H1 (cell line): ENCODE measurements at regions of chr4 and their contacts with region 1.

Region 1: GRCh38 chr4:793941-794621 is 31.8 kb downstream of the CPLX1 start:
- DNase-seq: no peak
- H3K4me3 ChIP-seq: no peak overlapping the region
- H3K27ac ChIP-seq: no peak overlapping the region
- H3K4me1 ChIP-seq: peaks cover 5 to 38% (median 21%) of the 10 kb centered on the region in 4 experiments
- H3K27me3 ChIP-seq: peaks cover 19 to 65% (median 53%) of the 10 kb centered on the region in 4 experiments
- CTCF ChIP-seq: no peak
- EP300 ChIP-seq: no peak
- POLR2A ChIP-seq: no peak
- RAD21 ChIP-seq: no peak

Region 2: DNA sequence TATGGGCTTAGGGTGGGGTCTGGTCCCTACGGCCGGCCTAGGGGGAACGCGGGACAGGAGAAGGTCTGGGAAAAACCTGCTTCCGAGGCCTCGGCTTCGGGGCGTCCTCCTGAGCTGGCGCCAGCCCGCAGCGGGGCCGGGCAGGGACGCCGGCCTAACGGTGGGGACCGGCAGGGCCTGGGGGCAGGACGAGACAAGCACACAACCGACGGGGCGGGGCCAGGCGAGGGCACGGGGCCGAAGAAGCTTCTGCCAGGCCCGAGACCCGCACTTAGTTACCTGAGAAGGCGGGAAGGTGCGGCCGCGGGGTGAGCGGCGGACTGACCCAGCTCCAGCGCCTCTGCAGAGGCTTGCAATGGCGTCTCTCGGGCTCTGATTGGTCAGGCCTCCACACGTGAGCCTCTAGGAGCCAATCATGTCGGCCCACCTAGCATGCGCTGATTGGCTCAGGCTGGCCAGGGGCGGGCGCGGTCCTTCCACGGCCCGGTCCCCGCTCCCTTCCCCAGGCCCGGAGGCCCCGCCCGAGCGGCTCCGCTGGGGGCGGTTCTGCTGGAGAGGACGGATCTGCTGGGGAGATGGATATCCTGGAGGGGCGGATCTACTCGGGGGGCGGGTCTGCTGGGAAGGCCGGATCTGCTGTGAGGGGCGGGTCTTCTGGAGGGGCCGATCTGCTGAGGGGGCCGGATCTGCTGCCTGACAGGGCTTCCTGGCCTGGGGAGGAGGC is 12.4 kb before region 1 on chr4:
- CTCF ChIA-PET with region 1: interaction called, 12 read pairs
- POLR2A ChIA-PET with region 1: interaction called, 14 read pairs
- DNase-seq: peak; percentile 98
- H3K4me3 ChIP-seq: peak overlapping the region; percentile 77 to 92 (median 91)
- H3K27ac ChIP-seq: peak overlapping the region; percentile 94
- H3K4me1 ChIP-seq: peaks cover 0 to 21% (median 18%) of the 10 kb centered on the region in 4 experiments; a peak in 6 of 7 replicates
- H3K27me3 ChIP-seq: peaks cover 27 to 38% (median 38%) of the 10 kb centered on the region in 4 experiments
- CTCF ChIP-seq: no peak
- EP300 ChIP-seq: no peak
- POLR2A ChIP-seq: peak in 1 of 2 experiments; percentile 97; a peak in 2 of 3 replicates
- RAD21 ChIP-seq: no peak

Region 3: DNA sequence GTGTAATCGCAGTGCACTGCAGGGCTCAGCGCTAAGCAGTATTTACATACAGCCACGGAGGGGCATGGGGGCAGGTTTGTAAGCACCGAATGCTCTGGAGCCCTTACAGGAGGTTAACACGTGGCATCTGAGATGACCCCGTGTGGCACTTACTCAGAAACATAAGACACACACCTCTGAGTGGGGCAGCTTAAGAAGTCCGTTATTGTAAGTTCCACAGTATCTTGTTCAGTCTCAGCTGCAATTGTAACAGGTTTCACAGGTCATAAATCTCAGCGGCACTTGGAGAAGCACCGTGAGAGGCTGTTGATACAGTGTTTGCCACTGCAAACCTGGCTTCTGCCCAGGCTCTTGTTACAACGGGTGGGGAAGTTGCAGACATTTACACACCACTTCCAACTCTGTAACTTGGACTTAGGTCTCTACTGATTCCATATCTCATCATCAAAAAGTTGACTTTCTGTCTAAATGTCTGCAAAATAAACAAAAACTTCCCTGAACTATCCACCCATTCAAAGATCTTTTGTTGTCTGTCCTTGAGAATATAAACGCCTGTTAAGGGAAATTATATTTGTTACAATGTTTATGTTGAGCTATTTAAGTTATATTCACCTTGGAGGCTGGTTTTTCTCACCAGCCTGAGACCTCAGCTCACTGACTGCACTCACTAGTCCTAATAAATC is 21.5 kb after region 1 on chr4:
- CTCF ChIA-PET with region 1: interaction called, 11 read pairs
- POLR2A ChIA-PET with region 1: no interaction called
- DNase-seq: no peak
- H3K4me3 ChIP-seq: no peak overlapping the region
- H3K27ac ChIP-seq: no peak overlapping the region
- H3K4me1 ChIP-seq: no peaks in the 10 kb centered on the region
- H3K27me3 ChIP-seq: peaks cover 7 to 73% (median 43%) of the 10 kb centered on the region in 4 experiments
- CTCF ChIP-seq: no peak
- EP300 ChIP-seq: no peak
- POLR2A ChIP-seq: no peak
- RAD21 ChIP-seq: no peak

Region 4: DNA sequence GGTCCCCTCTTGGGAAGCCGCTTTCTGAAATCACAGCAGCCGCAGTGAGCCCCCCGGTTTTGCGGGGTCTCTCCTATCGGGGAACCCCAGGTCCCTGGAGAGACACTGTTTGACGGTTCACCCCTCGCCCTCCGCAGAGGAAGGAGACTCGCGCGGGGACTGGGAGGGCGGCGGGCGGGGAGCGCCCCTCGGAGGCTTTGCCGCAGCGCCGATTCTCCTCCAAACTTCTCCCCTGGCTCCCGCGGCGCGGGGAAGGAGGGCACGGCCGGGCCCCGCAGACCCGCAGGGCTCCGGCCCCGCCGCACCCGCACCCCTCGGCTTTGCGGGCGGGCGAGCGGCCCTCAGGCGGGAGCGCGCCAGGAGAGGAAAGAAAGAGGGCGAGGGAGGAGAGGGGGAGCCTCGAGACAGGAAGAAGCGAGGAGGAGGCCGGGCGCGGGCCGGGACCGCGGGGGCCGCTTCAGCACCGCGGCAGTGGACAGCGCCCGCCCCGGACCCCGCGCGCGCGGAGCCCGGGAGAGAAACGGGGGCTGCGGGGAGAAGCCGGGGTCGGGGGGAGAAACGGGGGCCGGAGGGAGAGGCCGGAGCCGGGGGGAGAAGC is 31.3 kb after region 1 on chr4:
- CTCF ChIA-PET with region 1: interaction called, 17 read pairs
- POLR2A ChIA-PET with region 1: no interaction called
- DNase-seq: peak in 1 of 2 experiments; percentile 69
- H3K4me3 ChIP-seq: peak overlapping the region in 1 of 4 experiments; percentile 51; a peak in 5 of 8 replicates
- H3K27ac ChIP-seq: no peak overlapping the region
- H3K4me1 ChIP-seq: peaks cover 0 to 4% (median 2%) of the 10 kb centered on the region in 4 experiments; a peak in 3 of 7 replicates
- H3K27me3 ChIP-seq: peaks cover 39 to 71% (median 64%) of the 10 kb centered on the region in 4 experiments
- CTCF ChIP-seq: no peak
- EP300 ChIP-seq: no peak
- POLR2A ChIP-seq: no peak
- RAD21 ChIP-seq: no peak